Psoas muscle (tissue), 8 donors: ENCODE measurements at regions of chr1 and their contacts with region 1.

Region 1: DNA sequence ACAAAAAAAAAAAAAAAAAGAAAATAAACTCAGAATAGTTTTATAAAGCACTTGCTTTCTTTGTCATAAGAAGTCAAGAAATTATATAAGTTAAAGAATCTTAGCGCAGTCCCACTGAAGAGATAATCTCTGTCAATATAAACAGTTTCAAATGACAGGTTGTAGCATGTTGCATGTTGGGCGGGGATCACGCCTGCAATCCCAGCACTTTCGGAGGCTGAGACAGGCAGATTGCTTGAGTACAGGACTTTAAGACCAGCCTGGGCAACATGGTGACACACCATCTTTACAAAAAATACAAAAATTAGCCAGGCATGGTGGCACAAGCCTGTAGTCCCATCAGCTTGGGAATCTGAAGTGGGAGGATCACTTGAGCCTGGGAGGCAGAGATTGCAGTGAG is 18.4 kb upstream of the INPP5B start:
- DNase-seq: no peak
- ATAC-seq: no peak
- H3K4me3 ChIP-seq: no peak overlapping the region
- H3K27ac ChIP-seq: no peak overlapping the region
- H3K4me1 ChIP-seq: no peaks in the 10 kb centered on the region
- H3K27me3 ChIP-seq: no peaks in the 10 kb centered on the region
- CTCF ChIP-seq: no peak

Region 2: GRCh38 chr1:37872692-37873091 is 92.6 kb before region 1 on chr1:
- intact Hi-C with region 1: no loop called
- DNase-seq: no peak
- ATAC-seq: no peak
- H3K4me3 ChIP-seq: no peak overlapping the region
- H3K27ac ChIP-seq: no peak overlapping the region
- H3K4me1 ChIP-seq: no peaks in the 10 kb centered on the region
- H3K27me3 ChIP-seq: no peaks in the 10 kb centered on the region
- CTCF ChIP-seq: no peak

Region 3: DNA sequence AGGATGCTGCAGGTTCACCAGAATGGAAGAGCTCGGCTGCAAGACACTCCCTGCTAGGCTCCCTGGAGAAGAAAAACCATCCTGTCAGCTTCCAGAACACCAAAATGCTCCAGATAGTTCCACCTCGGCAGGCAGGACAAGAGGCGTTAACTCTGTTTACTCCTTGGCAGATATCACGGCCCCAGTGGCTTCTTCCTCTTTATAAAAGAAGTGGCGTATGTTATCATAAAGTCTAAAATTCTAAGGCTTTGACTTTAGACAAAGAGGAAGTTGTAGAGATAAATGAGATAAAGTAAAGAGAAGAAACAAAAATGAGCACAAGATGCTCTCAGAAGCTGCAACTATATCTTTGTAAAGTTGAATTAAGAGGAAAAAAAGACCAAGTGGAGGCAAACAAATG is 81.6 kb before region 1 on chr1:
- intact Hi-C with region 1: loop called in 1 of 2 experiments (anchors 5 kb)
- DNase-seq: no peak
- ATAC-seq: no peak
- H3K4me3 ChIP-seq: no peak overlapping the region
- H3K27ac ChIP-seq: no peak overlapping the region
- H3K4me1 ChIP-seq: no peaks in the 10 kb centered on the region
- H3K27me3 ChIP-seq: no peaks in the 10 kb centered on the region
- CTCF ChIP-seq: no peak